ENCODE measurements at regions of chr3 and their contacts with region 1.

Region 1: GRCh38 chr3:152026033-152026556 is 152.7 kb downstream of the SUCNR1 start:
- DNase-seq: peak; percentile 95
- H3K4me3 ChIP-seq: peak overlapping the region in 1 of 3 experiments; percentile 41
- H3K27ac ChIP-seq: peak overlapping the region; percentile 89
- H3K4me1 ChIP-seq: peaks cover 41% of the 10 kb centered on the region
- H3K27me3 ChIP-seq: no peaks in the 10 kb centered on the region
- CTCF ChIP-seq: peak; percentile 16 to 19
- POLR2A ChIP-seq: peak; percentile 45

Region 2: DNA sequence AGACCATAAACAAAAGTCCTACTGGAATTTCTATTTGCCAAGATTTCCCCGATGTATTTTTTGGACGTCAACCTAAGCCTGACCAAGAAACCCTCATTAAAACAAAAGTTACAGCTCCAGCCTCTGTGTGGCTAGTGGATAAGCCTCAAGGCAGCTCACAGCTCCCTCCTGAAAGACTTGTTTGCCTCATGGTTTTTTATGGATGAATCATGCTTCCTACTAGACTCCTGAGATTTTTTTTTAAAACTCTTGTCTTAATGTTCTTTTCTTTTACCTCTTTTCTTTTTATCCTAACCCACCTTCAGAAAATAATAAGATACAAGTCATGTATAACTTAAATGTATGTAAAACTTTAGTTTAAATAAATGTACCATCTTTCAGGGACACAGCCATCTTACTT is 100.2 kb before region 1 on chr3:
- CTCF ChIA-PET with region 1: no interaction called
- POLR2A ChIA-PET with region 1: no interaction called
- dilution Hi-C with region 1: no loop called
- intact Hi-C with region 1: loop called (anchors 1 kb)
- DNase-seq: peak; percentile 67
- H3K4me3 ChIP-seq: no peak overlapping the region
- H3K27ac ChIP-seq: peak overlapping the region; percentile 29
- H3K4me1 ChIP-seq: peaks cover 32% of the 10 kb centered on the region
- H3K27me3 ChIP-seq: no peaks in the 10 kb centered on the region
- CTCF ChIP-seq: no peak
- POLR2A ChIP-seq: no peak

Region 3: GRCh38 chr3:151989621-151990020 is 36.5 kb before region 1 on chr3:
- CTCF ChIA-PET with region 1: no interaction called
- POLR2A ChIA-PET with region 1: no interaction called
- dilution Hi-C with region 1: no loop called
- intact Hi-C with region 1: no loop called
- DNase-seq: no peak
- H3K4me3 ChIP-seq: no peak overlapping the region
- H3K27ac ChIP-seq: no peak overlapping the region
- H3K4me1 ChIP-seq: no peaks in the 10 kb centered on the region
- H3K27me3 ChIP-seq: no peaks in the 10 kb centered on the region
- CTCF ChIP-seq: no peak
- POLR2A ChIP-seq: no peak

Region 4: DNA sequence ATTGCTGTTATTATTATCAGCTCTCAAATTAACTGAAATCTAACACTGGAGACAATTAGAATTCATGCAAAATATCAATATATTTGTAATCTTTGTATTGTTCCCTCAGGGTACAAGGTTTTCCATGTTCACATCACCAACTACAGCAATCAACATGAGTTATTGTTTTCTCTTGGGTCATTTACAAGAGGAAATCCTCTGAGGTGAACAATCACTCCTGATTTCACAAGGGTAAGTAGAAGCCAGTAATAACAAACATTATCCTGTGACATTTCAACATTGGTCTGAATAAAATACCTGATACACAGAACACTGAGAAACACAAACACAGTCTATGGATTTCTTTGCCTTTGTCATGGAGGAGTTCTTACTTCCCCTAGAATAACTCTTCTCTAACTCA is 21.4 kb after region 1 on chr3:
- CTCF ChIA-PET with region 1: interaction called, 9 read pairs
- POLR2A ChIA-PET with region 1: no interaction called
- dilution Hi-C with region 1: no loop called
- intact Hi-C with region 1: loop called (anchors 1 kb)
- DNase-seq: peak; percentile 92
- H3K4me3 ChIP-seq: no peak overlapping the region
- H3K27ac ChIP-seq: peak overlapping the region; percentile 35
- H3K4me1 ChIP-seq: peaks cover 20% of the 10 kb centered on the region
- H3K27me3 ChIP-seq: no peaks in the 10 kb centered on the region
- CTCF ChIP-seq: no peak
- POLR2A ChIP-seq: no peak

Region 5: GRCh38 chr3:152328841-152329240 is 302.7 kb after region 1 on chr3:
- CTCF ChIA-PET with region 1: interaction called, 10 read pairs
- POLR2A ChIA-PET with region 1: interaction called, 3 read pairs
- dilution Hi-C with region 1: no loop called
- intact Hi-C with region 1: loop called (anchors 1 kb)
- DNase-seq: peak; percentile 95
- H3K4me3 ChIP-seq: peak overlapping the region in 1 of 3 experiments; percentile 43
- H3K27ac ChIP-seq: peak overlapping the region; percentile 93
- H3K4me1 ChIP-seq: peaks cover 83% of the 10 kb centered on the region
- H3K27me3 ChIP-seq: no peaks in the 10 kb centered on the region
- CTCF ChIP-seq: no peak
- POLR2A ChIP-seq: peak; percentile 49

Region 6: GRCh38 chr3:152357587-152357986 is 331.5 kb after region 1 on chr3:
- CTCF ChIA-PET with region 1: no interaction called
- POLR2A ChIA-PET with region 1: no interaction called
- dilution Hi-C with region 1: no loop called
- intact Hi-C with region 1: no loop called
- DNase-seq: no peak
- H3K4me3 ChIP-seq: no peak overlapping the region
- H3K27ac ChIP-seq: peak overlapping the region; percentile 20
- H3K4me1 ChIP-seq: peaks cover 42% of the 10 kb centered on the region
- H3K27me3 ChIP-seq: no peaks in the 10 kb centered on the region
- CTCF ChIP-seq: no peak
- POLR2A ChIP-seq: no peak

Region 7: DNA sequence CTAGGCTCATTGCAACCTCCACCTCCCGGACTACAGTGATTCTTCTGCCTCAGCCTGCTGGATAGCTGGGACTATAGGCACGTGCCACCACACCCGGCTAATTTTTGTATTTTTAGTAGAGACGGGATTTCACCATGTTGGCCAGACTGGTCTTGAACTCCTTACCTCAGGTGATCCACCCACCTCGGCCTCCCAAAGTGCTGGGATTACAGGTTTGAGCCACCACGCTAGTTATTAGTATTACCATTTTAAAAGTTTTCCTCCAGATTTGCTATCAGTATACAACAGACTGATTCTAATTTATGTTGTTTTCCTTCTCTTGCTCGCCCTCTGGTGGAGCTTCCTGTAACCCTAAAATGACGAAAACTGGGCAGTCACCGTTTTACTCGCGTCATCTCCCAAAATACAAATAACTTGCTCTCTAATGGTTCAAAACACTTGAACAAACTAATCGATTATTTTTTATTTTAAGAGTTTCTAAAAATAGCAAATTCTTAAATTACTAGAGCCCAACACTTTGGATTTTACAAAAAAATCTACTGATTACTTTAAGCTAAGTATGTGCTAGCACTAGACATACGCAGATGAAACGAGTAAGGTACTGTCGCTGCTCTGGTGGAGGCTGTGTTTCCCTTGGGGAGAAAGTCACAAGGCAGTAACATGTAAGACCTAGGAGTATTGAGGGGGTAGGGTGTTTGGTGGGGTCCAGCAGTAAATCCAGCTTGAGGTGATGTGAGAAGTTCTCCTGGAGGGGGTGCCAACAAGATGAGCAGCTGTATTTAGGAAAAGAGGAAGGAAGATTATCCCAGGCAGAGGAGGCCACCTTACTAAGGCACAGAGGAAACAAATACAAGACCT is 445.9 kb after region 1 on chr3:
- CTCF ChIA-PET with region 1: interaction called, 12 read pairs
- POLR2A ChIA-PET with region 1: no interaction called
- dilution Hi-C with region 1: no loop called
- intact Hi-C with region 1: no loop called
- DNase-seq: peak; percentile 76
- H3K4me3 ChIP-seq: no peak overlapping the region
- H3K27ac ChIP-seq: peak overlapping the region; percentile 13
- H3K4me1 ChIP-seq: no peaks in the 10 kb centered on the region
- H3K27me3 ChIP-seq: no peaks in the 10 kb centered on the region
- CTCF ChIP-seq: peak; percentile 54 to 63
- POLR2A ChIP-seq: no peak

Measured in endothelial cell of umbilical vein (primary cell).